ENCODE measurements at regions of chr7 and their contacts with region 1.

Region 1: GRCh38 chr7:95511716-95512260 is 26.0 kb downstream of the ASB4 start:
- DNase-seq: peak; percentile 36 to 53
- H3K4me3 ChIP-seq: no peak overlapping the region
- H3K27ac ChIP-seq: no peak overlapping the region
- H3K4me1 ChIP-seq: 0 out of 2 replicates have a peak, but pooled peaks cover 4% of the 10 kb centered on the region
- H3K27me3 ChIP-seq: no peaks in the 10 kb centered on the region
- CTCF ChIP-seq: peak; percentile 84

Region 2: DNA sequence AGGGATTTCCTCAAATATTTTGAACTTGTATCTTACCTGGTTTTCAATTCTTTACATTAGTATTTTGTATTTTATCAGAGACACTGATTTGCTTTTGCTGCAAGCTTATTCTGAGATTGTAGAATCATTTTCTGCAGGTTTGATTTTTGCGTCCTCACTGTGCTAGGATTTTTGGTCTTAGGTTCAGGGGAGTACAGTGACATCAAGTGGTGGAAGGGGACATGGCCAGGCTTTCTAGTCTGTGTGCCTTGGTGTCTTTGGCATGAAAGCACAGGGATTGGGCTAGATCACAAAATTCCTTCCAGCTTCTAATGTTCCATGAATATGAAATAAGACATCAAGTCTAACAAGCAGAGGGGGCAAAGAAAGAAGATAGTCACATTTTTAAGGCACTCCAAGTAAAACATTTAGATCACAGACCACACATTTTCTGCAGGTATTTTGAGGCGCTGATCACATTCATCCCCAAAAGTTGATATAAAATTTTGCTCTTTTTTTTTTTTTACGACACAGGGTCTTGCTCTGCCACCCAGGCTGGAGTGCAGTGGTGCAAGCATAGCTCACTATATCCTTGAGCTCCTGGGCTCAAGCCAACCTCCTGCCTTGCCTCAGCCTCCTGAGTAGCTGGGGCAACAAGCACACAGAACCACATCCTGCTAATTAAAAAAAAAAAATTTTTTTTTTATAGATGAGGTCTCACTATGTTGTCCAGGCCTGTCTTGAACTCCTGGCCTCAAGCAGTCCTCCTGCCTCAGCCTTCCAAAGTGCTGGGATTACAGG is 311.8 kb before region 1 on chr7:
- CTCF ChIA-PET with region 1: interaction called, 11 read pairs
- POLR2A ChIA-PET with region 1: no interaction called
- intact Hi-C with region 1: no loop called
- DNase-seq: peak in 1 of 2 experiments; percentile 33
- H3K4me3 ChIP-seq: no peak overlapping the region
- H3K27ac ChIP-seq: no peak overlapping the region
- H3K4me1 ChIP-seq: no peaks in the 10 kb centered on the region
- H3K27me3 ChIP-seq: no peaks in the 10 kb centered on the region
- CTCF ChIP-seq: peak; percentile 74

Region 3: DNA sequence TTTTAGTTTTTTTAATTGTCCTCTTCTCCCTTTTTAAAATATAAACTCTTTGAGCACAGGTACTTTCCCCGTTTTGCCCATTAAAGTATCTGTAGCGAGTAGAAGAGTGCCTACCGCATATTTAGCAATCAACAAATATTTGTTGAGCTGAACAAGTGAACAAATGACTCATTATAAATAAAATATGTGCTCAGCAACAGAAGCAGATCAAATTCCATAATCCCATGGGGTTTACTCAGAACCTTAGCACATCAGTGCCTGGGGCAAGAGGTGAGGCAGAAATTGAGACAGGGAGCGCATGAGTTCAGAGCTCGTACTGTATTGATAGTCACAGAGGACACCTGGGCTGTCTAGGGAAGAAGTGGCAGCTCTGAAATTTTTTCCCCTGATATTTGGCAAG is 1036.9 kb after region 1 on chr7:
- CTCF ChIA-PET with region 1: no interaction called
- POLR2A ChIA-PET with region 1: no interaction called
- intact Hi-C with region 1: no loop called
- DNase-seq: peak; percentile 84 to 98
- H3K4me3 ChIP-seq: no peak overlapping the region
- H3K27ac ChIP-seq: peak overlapping the region; percentile 52
- H3K4me1 ChIP-seq: peaks cover 35% of the 10 kb centered on the region
- H3K27me3 ChIP-seq: no peaks in the 10 kb centered on the region
- CTCF ChIP-seq: no peak